ENCODE measurements at regions of chr1 and their contacts with region 1.

Region 1: DNA sequence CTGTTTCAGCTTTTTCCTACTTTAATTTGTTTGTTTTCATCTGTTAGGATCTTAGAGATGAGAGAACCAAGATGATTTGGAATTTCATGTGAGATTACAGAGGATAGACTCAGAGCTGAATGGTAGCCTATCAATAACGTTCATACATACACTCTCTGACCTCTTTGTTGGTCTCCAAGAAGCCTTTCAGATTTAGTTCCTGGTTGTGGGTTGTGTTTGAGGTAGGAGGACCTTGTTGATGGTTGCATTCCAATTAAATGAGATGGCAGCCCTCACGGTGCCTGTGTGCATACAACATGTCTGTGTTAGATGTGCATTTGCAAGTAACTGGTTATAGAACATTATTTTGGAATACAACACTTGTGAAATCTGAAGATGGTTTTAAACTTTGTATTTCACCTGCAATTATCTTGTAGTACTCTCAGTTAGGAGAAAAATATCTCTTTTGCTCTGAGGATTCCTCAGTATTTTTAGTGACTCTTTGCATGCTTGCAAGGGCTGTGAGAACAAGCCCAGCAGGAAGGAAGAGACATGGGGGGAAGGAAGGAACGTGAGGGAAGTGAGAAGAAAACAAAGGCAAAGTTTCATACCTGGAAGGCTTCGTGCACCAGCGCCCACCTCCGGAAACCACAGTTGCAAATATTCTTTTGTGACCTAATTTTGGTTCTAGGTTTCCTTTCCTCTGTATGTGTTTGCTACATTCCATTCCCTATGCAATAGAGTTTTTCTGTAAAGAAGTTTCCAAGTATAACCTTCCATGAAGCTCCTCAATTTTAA is 291.8 kb downstream of the DISC1 start:
- DNase-seq: no peak

Region 2: GRCh38 chr1:231679109-231679508 is 239.3 kb before region 1 on chr1:
- intact Hi-C with region 1: loop called in 1 of 2 experiments (anchors 5 kb)
- DNase-seq: no peak